ENCODE measurements at regions of chr16 and their contacts with region 1.

Region 1: GRCh38 chr16:75305364-75306098 is 54.1 kb upstream of the BCAR1 start:
- DNase-seq: peak; percentile 41 to 63
- ATAC-seq: peak; percentile 80 to 94 (median 92)
- H3K4me3 ChIP-seq: peak overlapping the region in 3 of 10 donors; percentile 3 to 5 (median 4)
- H3K27ac ChIP-seq: peak overlapping the region; percentile 57 to 89 (median 83)
- H3K4me1 ChIP-seq: peaks cover 14 to 35% (median 29%) of the 10 kb centered on the region in 9 donors
- H3K27me3 ChIP-seq: peaks cover 0 to 18% (median 0%) of the 10 kb centered on the region in 7 donors
- CTCF ChIP-seq: peak in 1 of 9 donors; percentile 15

Region 2: GRCh38 chr16:75251280-75252048 is 54.1 kb before region 1 on chr16 and contains the start of gene BCAR1:
- intact Hi-C with region 1: loop called in 1 of 10 experiments (anchors 5 kb)
- DNase-seq: peak; percentile 90 to 91
- ATAC-seq: peak; percentile 57 to 84 (median 74)
- H3K4me3 ChIP-seq: peak within 1 kb of the TSS; percentile 73 to 99 (median 85)
- H3K27ac ChIP-seq: peak within 1 kb of the TSS; percentile 91 to 98 (median 96)
- H3K4me1 ChIP-seq: peaks cover 73 to 94% (median 89%) of the 10 kb centered on the region in 9 donors
- H3K27me3 ChIP-seq: peaks cover 0 to 74% (median 0%) of the 10 kb centered on the region in 7 donors
- CTCF ChIP-seq: peak in 6 of 9 donors; percentile 10 to 48 (median 28)
- total RNA-seq, gene BCAR1: 56.1 to 85.2 (median 72.4) TPM

Region 3: DNA sequence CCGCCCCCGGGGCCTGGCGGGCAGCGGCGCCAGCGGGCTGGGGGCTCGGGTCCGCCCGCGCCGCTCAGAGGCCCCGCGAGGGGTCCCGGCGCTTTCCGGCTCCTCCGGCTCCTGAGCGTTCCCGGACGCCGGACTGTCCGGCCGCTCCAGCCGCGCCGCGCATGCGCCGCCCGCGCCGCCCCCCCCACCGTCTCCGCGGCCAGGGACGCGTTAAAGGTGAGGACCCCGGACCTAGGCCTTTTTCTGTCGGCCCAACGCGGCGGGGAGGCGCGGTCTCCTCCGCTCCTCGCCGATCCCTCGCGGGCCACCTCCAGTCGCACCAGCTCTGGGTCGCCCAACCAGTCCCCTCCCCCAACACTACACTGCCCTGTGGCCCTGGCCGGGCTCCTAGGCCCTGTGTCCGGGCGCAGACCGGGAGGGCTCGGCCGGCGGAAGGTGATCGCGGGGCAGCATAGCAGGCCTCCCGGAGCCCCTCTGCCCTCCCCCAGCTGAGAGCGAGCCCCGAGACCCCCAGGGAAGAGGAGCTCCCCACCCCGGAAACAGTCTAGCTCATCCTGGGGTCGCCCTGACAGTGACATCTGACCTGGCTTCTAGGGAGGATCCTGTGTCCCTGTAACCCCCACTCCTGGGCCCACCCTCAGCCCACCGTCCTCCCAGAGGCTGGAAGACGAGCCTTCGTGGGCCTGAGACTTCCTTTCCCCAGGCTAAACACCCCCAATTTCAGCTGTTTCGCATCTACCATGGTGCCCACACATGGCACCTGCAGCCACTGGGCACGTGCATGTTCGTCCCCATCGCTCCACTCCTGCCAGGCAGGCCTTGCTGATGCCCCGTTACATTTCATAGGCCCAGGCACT is 39.5 kb before region 1 on chr16:
- intact Hi-C with region 1: loop called in 3 of 10 experiments (anchors 5 kb)
- DNase-seq: peak; percentile 72 to 82
- ATAC-seq: peak; percentile 41 to 74 (median 56)
- H3K4me3 ChIP-seq: peak overlapping the region; percentile 70 to 100 (median 86)
- H3K27ac ChIP-seq: peak overlapping the region; percentile 92 to 99 (median 96)
- H3K4me1 ChIP-seq: peaks cover 32 to 66% (median 53%) of the 10 kb centered on the region in 9 donors
- H3K27me3 ChIP-seq: peaks cover 0 to 63% (median 0%) of the 10 kb centered on the region in 7 donors
- CTCF ChIP-seq: no peak

Region 4: DNA sequence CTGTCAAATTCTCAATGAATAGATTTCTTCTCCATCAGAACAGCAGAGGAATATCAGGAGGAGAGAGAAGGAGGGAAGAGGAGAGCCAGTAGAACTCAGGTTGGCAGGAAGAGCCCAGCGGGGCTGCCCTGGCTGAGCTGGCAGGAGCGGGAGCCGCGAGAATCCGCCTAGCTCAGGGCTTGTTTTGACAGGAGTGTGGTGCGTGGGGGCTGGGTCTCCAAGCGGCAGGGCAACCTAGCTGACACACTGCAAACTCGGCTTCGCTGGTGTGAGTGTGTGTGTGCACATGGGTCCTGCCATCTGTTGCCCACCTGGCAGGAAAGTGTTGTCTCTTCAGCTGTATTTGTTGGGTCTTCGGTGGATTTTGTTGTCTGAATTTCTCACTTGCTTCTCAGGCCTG is 26.2 kb before region 1 on chr16:
- intact Hi-C with region 1: no loop called
- DNase-seq: no peak
- ATAC-seq: peak in 3 of 8 donors; percentile 51 to 59 (median 51)
- H3K4me3 ChIP-seq: no peak overlapping the region
- H3K27ac ChIP-seq: no peak overlapping the region
- H3K4me1 ChIP-seq: peaks cover 0 to 5% (median 0%) of the 10 kb centered on the region in 9 donors
- H3K27me3 ChIP-seq: peaks cover 0 to 29% (median 0%) of the 10 kb centered on the region in 7 donors
- CTCF ChIP-seq: no peak

Region 5: GRCh38 chr16:75385507-75386152 is 80.1 kb after region 1 on chr16:
- intact Hi-C with region 1: loop called in 1 of 10 experiments (anchors 10 kb)
- DNase-seq: peak in 1 of 2 donors; percentile 36
- ATAC-seq: peak in 1 of 8 donors; percentile 50
- H3K4me3 ChIP-seq: no peak overlapping the region
- H3K27ac ChIP-seq: no peak overlapping the region
- H3K4me1 ChIP-seq: peaks cover 0 to 50% (median 20%) of the 10 kb centered on the region in 9 donors
- H3K27me3 ChIP-seq: peaks cover 0 to 32% (median 0%) of the 10 kb centered on the region in 7 donors
- CTCF ChIP-seq: peak; percentile 67 to 84 (median 72)

Region 6: GRCh38 chr16:75710344-75710743 is 404.8 kb after region 1 on chr16:
- intact Hi-C with region 1: no loop called
- DNase-seq: no peak
- ATAC-seq: no peak
- H3K4me3 ChIP-seq: no peak overlapping the region
- H3K27ac ChIP-seq: no peak overlapping the region
- H3K4me1 ChIP-seq: no peaks in the 10 kb centered on the region
- H3K27me3 ChIP-seq: no peaks in the 10 kb centered on the region
- CTCF ChIP-seq: no peak